ENCODE measurements at regions of chr6 and their contacts with region 1.

Region 1: GRCh38 chr6:148736774-148737412 is 9.9 kb upstream of the UST start:
- DNase-seq: peak; percentile 26
- H3K4me3 ChIP-seq: no peak overlapping the region
- H3K27ac ChIP-seq: no peak overlapping the region
- H3K4me1 ChIP-seq: no peaks in the 10 kb centered on the region
- H3K27me3 ChIP-seq: no peaks in the 10 kb centered on the region
- CTCF ChIP-seq: no peak

Region 2: GRCh38 chr6:147961481-147962141 is 775.3 kb before region 1 on chr6:
- CTCF ChIA-PET with region 1: no interaction called
- dilution Hi-C with region 1: no loop called
- in situ Hi-C with region 1: no loop called
- intact Hi-C with region 1: no loop called
- DNase-seq: no peak
- H3K4me3 ChIP-seq: no peak overlapping the region
- H3K27ac ChIP-seq: no peak overlapping the region
- H3K4me1 ChIP-seq: peaks cover 5% of the 10 kb centered on the region
- H3K27me3 ChIP-seq: no peaks in the 10 kb centered on the region
- CTCF ChIP-seq: no peak

Region 3: GRCh38 chr6:148682990-148683389 is 53.9 kb before region 1 on chr6:
- CTCF ChIA-PET with region 1: no interaction called
- dilution Hi-C with region 1: loop called (anchors 5 kb)
- in situ Hi-C with region 1: no loop called
- intact Hi-C with region 1: no loop called
- DNase-seq: no peak
- H3K4me3 ChIP-seq: no peak overlapping the region
- H3K27ac ChIP-seq: no peak overlapping the region
- H3K4me1 ChIP-seq: no peaks in the 10 kb centered on the region
- H3K27me3 ChIP-seq: no peaks in the 10 kb centered on the region
- CTCF ChIP-seq: no peak

Measured in mammary epithelial cell (primary cell).